IMR-90 (cell line): ENCODE measurements at regions of chr7 and their contacts with region 1.

Region 1: GRCh38 chr7:155598810-155599210 is 45.7 kb upstream of the RBM33 start:
- DNase-seq: peak; percentile 59
- ATAC-seq: peak; percentile 95
- H3K4me3 ChIP-seq: no peak overlapping the region
- H3K27ac ChIP-seq: no peak overlapping the region
- H3K4me1 ChIP-seq: no peaks in the 10 kb centered on the region
- H3K27me3 ChIP-seq: peaks cover 18% of the 10 kb centered on the region
- CTCF ChIP-seq: peak; percentile 93
- POLR2A ChIP-seq: no peak
- RAD21 ChIP-seq: peak; percentile 84

Region 2: GRCh38 chr7:154927624-154928143 is 671.1 kb before region 1 on chr7:
- CTCF ChIA-PET with region 1: interaction called, 5 read pairs
- POLR2A ChIA-PET with region 1: no interaction called
- dilution Hi-C with region 1: no loop called
- in situ Hi-C with region 1: no loop called
- intact Hi-C with region 1: loop called (anchors 5 kb)
- DNase-seq: peak; percentile 87
- ATAC-seq: peak; percentile 48
- H3K4me3 ChIP-seq: peak overlapping the region; percentile 42
- H3K27ac ChIP-seq: peak overlapping the region; percentile 51; the same call in 1 of the 2 replicates
- H3K4me1 ChIP-seq: 0 out of 2 replicates have a peak, but pooled peaks cover 2% of the 10 kb centered on the region
- H3K27me3 ChIP-seq: no peaks in the 10 kb centered on the region
- CTCF ChIP-seq: peak; percentile 72
- POLR2A ChIP-seq: no peak
- RAD21 ChIP-seq: peak; percentile 78

Region 3: GRCh38 chr7:155277690-155277994 is 321.2 kb before region 1 on chr7:
- CTCF ChIA-PET with region 1: no interaction called
- POLR2A ChIA-PET with region 1: no interaction called
- dilution Hi-C with region 1: no loop called
- in situ Hi-C with region 1: no loop called
- intact Hi-C with region 1: no loop called
- DNase-seq: no peak
- ATAC-seq: no peak
- H3K4me3 ChIP-seq: no peak overlapping the region
- H3K27ac ChIP-seq: no peak overlapping the region
- H3K4me1 ChIP-seq: no peaks in the 10 kb centered on the region
- H3K27me3 ChIP-seq: peaks cover 20% of the 10 kb centered on the region
- CTCF ChIP-seq: no peak
- POLR2A ChIP-seq: no peak
- RAD21 ChIP-seq: no peak

Region 4: GRCh38 chr7:155644178-155644970 is 45.6 kb after region 1 on chr7 and contains the start of gene RBM33:
- CTCF ChIA-PET with region 1: no interaction called
- POLR2A ChIA-PET with region 1: no interaction called
- dilution Hi-C with region 1: no loop called
- in situ Hi-C with region 1: no loop called
- intact Hi-C with region 1: loop called (anchors 5 kb)
- DNase-seq: peak; percentile 83
- ATAC-seq: peak; percentile 92
- H3K4me3 ChIP-seq: peak within 1 kb of the TSS; percentile 88
- H3K27ac ChIP-seq: peak within 1 kb of the TSS; percentile 90
- H3K4me1 ChIP-seq: peaks cover 3% of the 10 kb centered on the region
- H3K27me3 ChIP-seq: no peaks in the 10 kb centered on the region
- CTCF ChIP-seq: no peak
- POLR2A ChIP-seq: peak; percentile 83
- RAD21 ChIP-seq: no peak
- total RNA-seq, gene RBM33: 7.3 and 10.6 TPM in 2 replicates

Region 5: GRCh38 chr7:155724327-155725005 is 125.7 kb after region 1 on chr7:
- CTCF ChIA-PET with region 1: interaction called, 4 read pairs
- POLR2A ChIA-PET with region 1: no interaction called
- dilution Hi-C with region 1: no loop called
- in situ Hi-C with region 1: loop called (anchors 5 kb)
- intact Hi-C with region 1: no loop called
- DNase-seq: no peak
- ATAC-seq: no peak
- H3K4me3 ChIP-seq: no peak overlapping the region
- H3K27ac ChIP-seq: no peak overlapping the region
- H3K4me1 ChIP-seq: 0 out of 2 replicates have a peak, but pooled peaks cover 2% of the 10 kb centered on the region
- H3K27me3 ChIP-seq: no peaks in the 10 kb centered on the region
- CTCF ChIP-seq: 0 out of 2 replicates have a peak, but pooled peaks have one; percentile 3
- POLR2A ChIP-seq: no peak
- RAD21 ChIP-seq: no peak

Region 6: GRCh38 chr7:155752756-155753445 is 154.1 kb after region 1 on chr7:
- CTCF ChIA-PET with region 1: interaction called, 3 read pairs
- POLR2A ChIA-PET with region 1: no interaction called
- dilution Hi-C with region 1: no loop called
- in situ Hi-C with region 1: loop called (anchors 10 kb)
- intact Hi-C with region 1: no loop called
- DNase-seq: no peak
- ATAC-seq: no peak
- H3K4me3 ChIP-seq: no peak overlapping the region
- H3K27ac ChIP-seq: no peak overlapping the region
- H3K4me1 ChIP-seq: 0 out of 2 replicates have a peak, but pooled peaks cover 2% of the 10 kb centered on the region
- H3K27me3 ChIP-seq: no peaks in the 10 kb centered on the region
- CTCF ChIP-seq: no peak
- POLR2A ChIP-seq: no peak
- RAD21 ChIP-seq: no peak

Region 7: DNA sequence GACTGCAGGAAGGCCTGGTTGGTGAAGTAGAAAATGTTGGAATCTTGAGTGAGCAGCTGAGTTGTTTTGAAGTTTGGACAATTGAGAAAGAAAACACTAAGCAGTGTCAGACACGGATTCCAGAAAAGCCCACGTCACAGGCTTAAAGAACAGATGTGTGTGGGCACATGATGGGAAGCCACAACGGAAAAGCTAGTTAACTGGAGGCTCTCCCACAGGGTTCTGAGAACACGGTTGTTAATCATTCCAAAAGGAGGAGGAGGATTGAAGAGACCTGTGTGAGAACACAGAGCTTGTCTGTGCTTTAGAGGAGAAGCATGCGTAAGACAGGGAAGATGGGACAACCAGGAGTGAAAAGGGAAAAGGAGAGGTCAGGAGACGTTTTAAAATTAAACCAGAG is 170.9 kb after region 1 on chr7:
- CTCF ChIA-PET with region 1: interaction called, 15 read pairs
- POLR2A ChIA-PET with region 1: no interaction called
- dilution Hi-C with region 1: no loop called
- in situ Hi-C with region 1: no loop called
- intact Hi-C with region 1: loop called (anchors 1 kb)
- DNase-seq: no peak
- ATAC-seq: no peak
- H3K4me3 ChIP-seq: no peak overlapping the region
- H3K27ac ChIP-seq: no peak overlapping the region
- H3K4me1 ChIP-seq: no peaks in the 10 kb centered on the region
- H3K27me3 ChIP-seq: no peaks in the 10 kb centered on the region
- CTCF ChIP-seq: no peak
- POLR2A ChIP-seq: no peak
- RAD21 ChIP-seq: no peak